ENCODE measurements at regions of chr12 and their contacts with region 1.

Region 1: GRCh38 chr12:103632554-103633216 is 45.6 kb downstream of the STAB2 start:
- DNase-seq: peak in 4 of 9 donors; percentile 3 to 75 (median 13)
- ATAC-seq: peak; percentile 45
- H3K4me3 ChIP-seq: no peak overlapping the region
- H3K4me3 Mint-ChIP-seq: no peak overlapping the region
- H3K27ac ChIP-seq: no peak overlapping the region
- H3K27ac Mint-ChIP-seq: no peak overlapping the region
- H3K4me1 ChIP-seq: no peaks in the 10 kb centered on the region
- H3K4me1 Mint-ChIP-seq: peaks cover 0 to 2% (median 0%) of the 10 kb centered on the region in 7 donors
- H3K27me3 ChIP-seq: no peaks in the 10 kb centered on the region
- H3K27me3 Mint-ChIP-seq: peaks cover 0 to 10% (median 0%) of the 10 kb centered on the region in 5 donors

Region 2: DNA sequence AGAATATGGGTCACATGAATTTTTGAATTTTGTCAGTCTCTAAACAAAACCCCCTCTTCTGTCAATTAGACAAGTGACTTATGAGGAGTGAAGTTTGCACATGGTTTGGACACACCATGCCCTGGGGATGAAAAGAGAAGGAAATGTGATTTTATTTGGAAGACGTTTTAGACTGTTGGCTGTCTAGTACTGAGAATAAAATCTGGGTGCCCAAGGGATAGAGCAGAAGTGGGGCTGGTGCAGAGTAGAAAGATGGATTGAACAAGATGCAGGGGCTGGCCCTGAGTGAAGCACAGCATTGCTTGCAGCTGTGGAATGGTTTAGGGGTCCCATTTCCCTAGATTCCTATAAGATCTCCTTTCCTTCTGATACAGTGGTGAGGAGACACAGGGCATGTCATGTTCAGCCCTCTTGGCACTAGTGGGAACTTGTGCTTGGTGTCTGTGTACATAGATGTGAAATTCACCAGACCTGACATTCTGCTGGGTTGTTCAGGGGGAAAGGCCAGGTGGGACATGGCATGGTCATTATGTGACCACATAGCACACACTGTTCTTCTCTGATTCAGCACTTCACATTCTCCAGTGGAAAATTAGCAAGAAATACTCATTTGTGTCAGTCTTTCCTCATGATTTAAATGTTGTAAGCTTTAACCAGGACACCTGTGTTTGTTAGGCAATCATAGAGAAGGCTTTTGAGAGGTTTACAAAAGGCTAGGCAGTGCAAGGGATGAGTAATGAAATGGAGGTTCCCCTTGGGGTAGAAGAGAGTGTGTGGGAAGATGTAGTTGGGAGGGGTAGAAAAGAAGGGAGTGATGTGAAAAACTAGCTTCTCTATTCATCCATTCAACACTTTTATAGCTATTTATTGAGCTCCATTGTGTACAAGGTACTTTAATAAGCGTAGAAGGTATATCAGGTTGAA is 950.1 kb before region 1 on chr12:
- CTCF ChIA-PET with region 1: no interaction called
- POLR2A ChIA-PET with region 1: no interaction called
- intact Hi-C with region 1: no loop called
- DNase-seq: no peak
- ATAC-seq: no peak
- H3K4me3 ChIP-seq: no peak overlapping the region
- H3K4me3 Mint-ChIP-seq: no peak overlapping the region
- H3K27ac ChIP-seq: no peak overlapping the region
- H3K27ac Mint-ChIP-seq: no peak overlapping the region
- H3K4me1 ChIP-seq: no peaks in the 10 kb centered on the region
- H3K4me1 Mint-ChIP-seq: peaks cover 0 to 1% (median 0%) of the 10 kb centered on the region in 7 donors
- H3K27me3 ChIP-seq: no peaks in the 10 kb centered on the region
- H3K27me3 Mint-ChIP-seq: peaks cover 0 to 7% (median 0%) of the 10 kb centered on the region in 5 donors

Region 3: DNA sequence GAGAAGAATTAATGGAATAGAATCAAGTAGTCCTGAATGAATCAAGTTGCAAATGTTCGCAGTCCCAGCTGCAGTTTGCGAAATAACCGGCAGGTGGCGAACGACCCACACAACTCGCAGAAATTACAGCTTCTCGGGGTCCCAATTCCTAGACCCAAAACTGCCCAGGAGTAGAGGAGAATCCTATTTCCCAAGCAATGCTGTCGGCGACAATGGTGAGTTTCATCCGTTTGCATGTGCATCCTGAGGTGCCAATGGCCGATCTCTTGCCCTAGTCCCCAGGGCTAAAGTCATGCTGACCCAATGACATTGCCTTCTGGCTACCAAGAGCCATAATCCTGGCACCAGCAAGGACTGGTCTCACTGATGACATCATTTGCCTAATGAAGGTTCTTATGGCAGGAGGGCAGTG is 683.7 kb before region 1 on chr12:
- CTCF ChIA-PET with region 1: no interaction called
- POLR2A ChIA-PET with region 1: no interaction called
- intact Hi-C with region 1: loop called in 1 of 2 experiments (anchors 2 kb)
- DNase-seq: peak in 5 of 9 donors; percentile 31 to 48 (median 43)
- ATAC-seq: no peak
- H3K4me3 ChIP-seq: no peak overlapping the region
- H3K4me3 Mint-ChIP-seq: no peak overlapping the region
- H3K27ac ChIP-seq: no peak overlapping the region
- H3K27ac Mint-ChIP-seq: no peak overlapping the region
- H3K4me1 ChIP-seq: no peaks in the 10 kb centered on the region
- H3K4me1 Mint-ChIP-seq: peaks cover 0 to 14% (median 4%) of the 10 kb centered on the region in 7 donors
- H3K27me3 ChIP-seq: no peaks in the 10 kb centered on the region
- H3K27me3 Mint-ChIP-seq: peaks cover 60 to 74% (median 61%) of the 10 kb centered on the region in 5 donors

Region 4: DNA sequence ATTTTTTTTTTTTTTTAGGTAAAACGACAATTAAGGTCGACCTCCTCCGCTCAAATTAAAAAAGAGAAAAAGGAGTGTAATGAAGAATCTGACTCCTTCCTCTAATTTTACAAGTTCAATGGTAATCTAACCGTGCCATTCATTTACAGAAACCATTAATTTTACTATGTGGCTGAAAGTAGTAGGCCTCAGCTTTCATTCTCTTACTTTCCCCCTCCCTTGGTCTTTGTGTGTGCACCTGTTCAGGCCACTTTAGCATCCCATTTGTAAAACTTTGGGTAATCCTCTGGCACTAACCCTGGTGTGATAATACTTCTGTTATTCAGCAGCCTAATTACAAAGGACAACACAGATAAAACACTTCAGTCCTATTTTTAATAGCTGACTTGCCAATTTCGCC is 547.1 kb before region 1 on chr12:
- CTCF ChIA-PET with region 1: no interaction called
- POLR2A ChIA-PET with region 1: no interaction called
- intact Hi-C with region 1: no loop called
- DNase-seq: no peak
- ATAC-seq: no peak
- H3K4me3 ChIP-seq: no peak overlapping the region
- H3K4me3 Mint-ChIP-seq: no peak overlapping the region
- H3K27ac ChIP-seq: no peak overlapping the region
- H3K27ac Mint-ChIP-seq: no peak overlapping the region
- H3K4me1 ChIP-seq: no peaks in the 10 kb centered on the region
- H3K4me1 Mint-ChIP-seq: no peaks in the 10 kb centered on the region
- H3K27me3 ChIP-seq: no peaks in the 10 kb centered on the region
- H3K27me3 Mint-ChIP-seq: peaks cover 0 to 5% (median 0%) of the 10 kb centered on the region in 5 donors

Region 5: DNA sequence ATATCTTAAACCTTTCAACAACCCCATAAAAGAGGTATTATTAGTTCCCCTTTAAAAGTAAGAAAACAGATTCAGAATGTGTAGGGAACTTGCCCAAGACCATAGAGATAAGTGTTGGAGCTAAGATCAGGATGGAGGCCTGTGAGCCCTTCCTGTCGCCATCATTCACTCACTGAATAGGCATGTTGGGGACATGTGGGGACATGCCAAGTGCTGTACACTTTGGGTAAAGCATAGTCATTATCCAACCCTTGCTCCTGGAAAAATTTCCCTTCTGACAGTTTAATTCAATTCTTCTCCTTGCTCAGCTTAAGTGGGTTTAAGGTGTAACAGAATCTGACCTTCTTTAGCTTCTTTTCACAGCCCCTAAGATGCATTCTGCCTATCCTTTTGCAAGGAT is 108.9 kb before region 1 on chr12:
- CTCF ChIA-PET with region 1: no interaction called
- POLR2A ChIA-PET with region 1: no interaction called
- intact Hi-C with region 1: no loop called
- DNase-seq: no peak
- ATAC-seq: no peak
- H3K4me3 ChIP-seq: no peak overlapping the region
- H3K4me3 Mint-ChIP-seq: no peak overlapping the region
- H3K27ac ChIP-seq: no peak overlapping the region
- H3K27ac Mint-ChIP-seq: no peak overlapping the region
- H3K4me1 ChIP-seq: no peaks in the 10 kb centered on the region
- H3K4me1 Mint-ChIP-seq: peaks cover 0 to 2% (median 0%) of the 10 kb centered on the region in 7 donors
- H3K27me3 ChIP-seq: no peaks in the 10 kb centered on the region
- H3K27me3 Mint-ChIP-seq: peaks cover 0 to 13% (median 0%) of the 10 kb centered on the region in 5 donors

Region 6: GRCh38 chr12:103571286-103571685 is 61.4 kb before region 1 on chr12:
- CTCF ChIA-PET with region 1: no interaction called
- POLR2A ChIA-PET with region 1: no interaction called
- intact Hi-C with region 1: loop called in 1 of 2 experiments (anchors 1 kb)
- DNase-seq: no peak
- ATAC-seq: no peak
- H3K4me3 ChIP-seq: no peak overlapping the region
- H3K4me3 Mint-ChIP-seq: no peak overlapping the region
- H3K27ac ChIP-seq: no peak overlapping the region
- H3K27ac Mint-ChIP-seq: no peak overlapping the region
- H3K4me1 ChIP-seq: no peaks in the 10 kb centered on the region
- H3K4me1 Mint-ChIP-seq: peaks cover 0 to 11% (median 5%) of the 10 kb centered on the region in 7 donors
- H3K27me3 ChIP-seq: no peaks in the 10 kb centered on the region
- H3K27me3 Mint-ChIP-seq: peaks cover 50 to 84% (median 69%) of the 10 kb centered on the region in 5 donors

Region 7: DNA sequence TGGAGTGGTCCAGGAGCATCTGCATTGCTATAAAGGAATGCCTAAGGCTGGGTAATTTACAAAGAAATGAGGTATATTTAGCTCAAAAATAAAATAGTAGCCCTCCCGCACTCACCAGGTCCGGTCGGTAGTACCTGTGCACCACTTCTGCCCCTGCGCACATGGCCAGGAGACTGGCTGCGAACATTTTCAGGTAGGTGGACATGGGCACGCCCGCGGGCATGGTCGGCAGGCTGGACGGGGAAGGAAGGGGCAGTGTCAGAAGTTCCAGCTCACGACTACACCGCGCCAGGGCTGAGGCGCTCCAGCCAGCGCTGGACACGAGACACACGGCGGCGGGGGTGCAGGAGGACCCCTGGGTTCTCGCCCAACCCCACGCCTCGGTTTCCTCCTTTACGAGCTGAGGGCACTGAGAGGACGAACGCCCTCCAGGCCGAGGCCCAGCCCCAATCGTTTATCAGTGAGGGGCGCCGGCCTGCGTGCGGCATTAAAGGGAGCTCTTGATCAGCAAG is 323.9 kb after region 1 on chr12:
- CTCF ChIA-PET with region 1: no interaction called
- POLR2A ChIA-PET with region 1: no interaction called
- intact Hi-C with region 1: no loop called
- DNase-seq: peak in 3 of 9 donors; percentile 4 to 7 (median 5)
- ATAC-seq: no peak
- H3K4me3 ChIP-seq: peak overlapping the region; percentile 91
- H3K4me3 Mint-ChIP-seq: peak overlapping the region; percentile 95 to 100 (median 99)
- H3K27ac ChIP-seq: peak overlapping the region; percentile 73
- H3K27ac Mint-ChIP-seq: peak overlapping the region; percentile 93 to 99 (median 98)
- H3K4me1 ChIP-seq: peaks cover 13 to 17% of the 10 kb centered on the region in 2 donors
- H3K4me1 Mint-ChIP-seq: peaks cover 25 to 58% (median 43%) of the 10 kb centered on the region in 7 donors
- H3K27me3 ChIP-seq: no peaks in the 10 kb centered on the region
- H3K27me3 Mint-ChIP-seq: no peaks in the 10 kb centered on the region

Measured in naive thymus-derived CD4-positive, alpha-beta T cell (primary cell).